ENCODE measurements at regions of chr11 and their contacts with region 1.

Region 1: GRCh38 chr11:126062679-126063506 is at the start of gene CDON:
- DNase-seq: peak; percentile 88 to 97
- H3K4me3 ChIP-seq: peak within 1 kb of the TSS; percentile 83
- CTCF ChIP-seq: peak in 1 of 3 donors; percentile 48
- POLR2A ChIP-seq: no peak
- total RNA-seq, gene CDON: 12.3 to 21.0 (median 18.0) TPM

Region 2: DNA sequence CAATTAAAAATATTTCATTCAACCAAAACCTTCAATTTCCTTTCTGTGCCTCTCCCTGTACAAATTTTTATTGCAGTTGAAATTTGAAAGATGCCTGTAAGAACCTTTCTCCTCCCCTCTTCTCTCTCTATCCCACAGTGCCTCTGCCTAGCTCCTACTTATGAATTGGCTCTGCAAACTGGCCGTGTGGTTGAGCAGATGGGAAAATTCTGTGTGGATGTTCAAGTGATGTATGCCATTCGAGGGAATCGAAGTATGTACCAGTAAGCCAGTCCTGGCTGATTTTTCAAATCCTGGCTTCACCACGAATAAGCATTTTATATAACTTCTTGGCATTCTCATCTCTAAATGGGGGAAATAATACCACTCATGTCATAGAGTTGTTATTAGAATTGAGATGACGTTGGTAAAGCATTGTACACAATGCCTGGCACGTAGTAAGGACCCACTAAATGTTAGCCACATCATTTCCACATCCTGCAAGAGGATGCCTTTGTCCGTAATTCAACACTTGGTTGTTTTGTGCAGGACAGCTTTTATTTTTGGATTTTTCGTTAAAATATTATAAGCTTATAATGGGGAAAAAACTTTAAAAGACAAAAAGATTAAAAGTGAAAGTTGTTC is 152.6 kb before region 1 on chr11:
- intact Hi-C with region 1: no loop called
- DNase-seq: no peak
- H3K4me3 ChIP-seq: no peak overlapping the region
- CTCF ChIP-seq: no peak
- POLR2A ChIP-seq: no peak

Region 3: GRCh38 chr11:125941619-125942611 is 121.0 kb before region 1 on chr11:
- intact Hi-C with region 1: loop called (anchors 5 kb)
- DNase-seq: peak in 1 of 2 donors; percentile 88
- H3K4me3 ChIP-seq: no peak overlapping the region
- CTCF ChIP-seq: no peak
- POLR2A ChIP-seq: no peak

Region 4: DNA sequence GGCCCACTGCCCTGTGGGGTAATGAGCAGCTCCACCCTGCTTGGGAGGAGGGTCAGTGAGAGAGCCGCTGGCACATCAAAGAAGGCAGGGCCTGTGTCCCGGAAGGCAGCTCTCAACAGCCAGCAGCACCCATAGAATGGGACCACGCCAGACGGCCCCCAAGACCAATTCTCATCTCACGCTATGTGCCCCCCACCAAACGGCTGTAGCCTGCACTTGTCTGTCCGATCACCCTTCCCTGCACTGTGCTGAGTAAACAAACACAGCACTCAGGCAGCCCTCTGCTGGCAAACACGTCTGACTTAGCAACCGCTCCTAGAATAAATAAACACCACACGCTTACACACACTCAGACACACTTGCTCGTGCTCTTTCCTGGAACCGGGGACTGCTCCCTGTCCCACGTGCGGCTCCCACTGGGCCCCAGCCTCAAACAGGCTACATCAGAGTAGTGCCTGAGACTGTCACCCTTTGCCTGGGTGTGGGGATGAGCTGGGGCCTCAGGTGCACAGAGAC is 53.0 kb after region 1 on chr11:
- intact Hi-C with region 1: no loop called
- DNase-seq: peak; percentile 62 to 92
- H3K4me3 ChIP-seq: no peak overlapping the region
- CTCF ChIP-seq: peak in 1 of 3 donors; percentile 42
- POLR2A ChIP-seq: no peak

Region 5: DNA sequence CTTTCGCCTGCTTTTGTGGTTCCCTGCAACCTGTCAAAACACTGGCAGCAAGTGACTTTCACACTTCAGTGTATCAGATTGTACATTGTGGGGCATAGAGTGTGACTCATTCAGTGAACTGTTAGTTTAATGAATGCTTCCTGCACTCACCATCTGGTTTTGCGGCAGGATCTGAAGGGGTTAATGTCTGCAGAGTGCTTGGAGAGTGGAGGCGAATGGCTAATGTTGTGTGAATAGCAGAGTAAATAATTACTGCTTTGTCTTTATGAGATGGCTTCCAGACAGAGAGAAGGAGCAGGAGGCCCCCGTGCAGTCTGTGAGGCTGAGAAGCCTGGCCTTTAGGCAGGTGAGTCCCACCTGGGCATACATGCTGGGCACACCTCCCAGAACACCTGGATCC is 1392.0 kb after region 1 on chr11:
- intact Hi-C with region 1: no loop called
- DNase-seq: no peak
- H3K4me3 ChIP-seq: no peak overlapping the region
- CTCF ChIP-seq: no peak
- POLR2A ChIP-seq: no peak